Left lung (tissue), 14 donors: ENCODE measurements at regions of chr20 and their contacts with region 1.

Region 1: GRCh38 chr20:4720041-4720976 is 1.4 kb upstream of the PRND start:
- DNase-seq: peak; percentile 60 to 87 (median 77)
- ATAC-seq: peak; percentile 96
- H3K4me3 ChIP-seq: no peak overlapping the region
- H3K27ac ChIP-seq: peak overlapping the region; percentile 60 to 72
- H3K4me1 ChIP-seq: peaks cover 0 to 16% of the 10 kb centered on the region in 2 donors
- H3K27me3 ChIP-seq: no peaks in the 10 kb centered on the region
- CTCF ChIP-seq: peak; percentile 55 to 62

Region 2: GRCh38 chr20:4607287-4607713 is 113.0 kb before region 1 on chr20:
- intact Hi-C with region 1: loop called (anchors 2 to 10 kb)
- DNase-seq: peak in 2 of 4 donors; percentile 62 to 68
- ATAC-seq: peak; percentile 94
- H3K4me3 ChIP-seq: no peak overlapping the region
- H3K27ac ChIP-seq: no peak overlapping the region
- H3K4me1 ChIP-seq: no peaks in the 10 kb centered on the region
- H3K27me3 ChIP-seq: peaks cover 3 to 32% of the 10 kb centered on the region in 2 donors
- CTCF ChIP-seq: peak; percentile 87 to 91

Region 3: DNA sequence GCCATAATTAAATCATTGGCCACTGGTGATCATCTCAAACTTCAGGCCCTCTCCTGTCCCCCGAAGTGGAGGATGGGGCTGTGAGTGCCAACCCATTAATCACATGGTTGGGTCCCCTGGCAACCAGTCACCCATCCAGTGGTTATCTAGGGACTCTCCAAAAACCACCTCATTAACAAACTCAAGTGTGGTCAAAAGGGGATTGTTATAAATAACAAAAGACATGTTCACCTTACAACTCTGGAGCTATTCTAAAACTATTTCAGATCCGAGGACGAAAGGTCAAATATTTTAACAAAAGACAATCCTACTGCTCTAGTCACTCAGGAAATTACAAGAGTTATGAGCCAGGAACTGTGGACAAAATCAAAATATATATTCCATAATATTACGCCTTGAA is 94.1 kb before region 1 on chr20:
- intact Hi-C with region 1: no loop called
- DNase-seq: no peak
- ATAC-seq: no peak
- H3K4me3 ChIP-seq: no peak overlapping the region
- H3K27ac ChIP-seq: no peak overlapping the region
- H3K4me1 ChIP-seq: no peaks in the 10 kb centered on the region
- H3K27me3 ChIP-seq: peaks cover 0 to 7% of the 10 kb centered on the region in 2 donors
- CTCF ChIP-seq: no peak